Endothelial cell of umbilical vein (primary cell): ENCODE measurements at regions of chr22 and their contacts with region 1.

Region 1: DNA sequence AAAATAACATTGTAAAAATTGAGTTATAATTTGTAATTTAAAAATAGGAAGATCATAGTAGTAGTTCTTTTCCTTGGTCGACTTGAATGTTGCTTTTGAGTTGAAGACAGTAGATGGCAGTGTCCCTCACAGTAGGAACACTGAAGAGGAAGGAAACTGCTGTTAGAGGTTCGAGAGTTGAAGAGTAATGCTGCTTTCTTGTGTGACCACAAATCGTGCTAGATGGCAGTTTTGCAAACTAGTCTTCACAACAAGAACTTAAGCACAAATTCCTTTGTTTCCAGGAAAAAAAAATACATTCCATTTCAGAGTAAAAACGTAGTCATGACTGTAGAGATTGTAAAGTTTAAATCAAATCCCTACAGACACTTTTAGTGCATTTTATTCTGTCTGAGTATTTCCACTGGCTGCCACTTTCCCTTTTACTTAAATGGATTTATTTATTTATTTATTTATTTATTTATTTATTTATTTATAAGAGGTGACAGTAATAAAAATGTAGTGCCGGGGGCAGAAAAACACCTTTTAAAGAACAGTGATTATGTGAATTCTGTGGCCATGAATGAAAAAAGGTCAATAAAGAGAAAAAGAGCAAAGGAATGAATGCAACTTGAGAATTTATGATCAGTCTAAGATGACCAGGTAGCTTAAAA is 54.6 kb downstream of the SPECC1L start:
- DNase-seq: peak; percentile 87
- H3K4me3 ChIP-seq: no peak overlapping the region
- H3K27ac ChIP-seq: no peak overlapping the region
- H3K4me1 ChIP-seq: peaks cover 27% of the 10 kb centered on the region
- H3K27me3 ChIP-seq: no peaks in the 10 kb centered on the region
- CTCF ChIP-seq: peak; percentile 64
- POLR2A ChIP-seq: no peak

Region 2: DNA sequence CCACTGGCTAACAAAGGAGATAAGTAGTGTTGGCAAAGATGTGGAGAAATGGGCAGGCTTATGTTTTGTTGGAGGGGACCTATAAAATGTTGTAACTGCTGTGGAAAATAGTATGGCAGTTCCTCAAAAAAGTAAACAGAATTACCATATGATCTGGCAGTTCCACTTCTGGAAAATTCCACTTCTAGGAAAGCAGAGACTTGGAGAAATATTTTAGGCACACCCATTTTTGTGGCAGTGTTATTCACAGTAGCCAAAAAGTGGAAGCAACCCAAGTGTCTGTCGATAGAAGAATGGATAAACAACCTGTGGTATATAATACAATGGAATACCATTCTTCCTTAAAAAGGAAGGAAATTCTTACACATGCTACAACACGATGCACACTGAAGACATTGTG is 45.2 kb after region 1 on chr22:
- CTCF ChIA-PET with region 1: no interaction called
- POLR2A ChIA-PET with region 1: no interaction called
- dilution Hi-C with region 1: no loop called
- intact Hi-C with region 1: loop called (anchors 5 kb)
- DNase-seq: peak; percentile 62
- H3K4me3 ChIP-seq: no peak overlapping the region
- H3K27ac ChIP-seq: peak overlapping the region; percentile 16
- H3K4me1 ChIP-seq: peaks cover 6% of the 10 kb centered on the region
- H3K27me3 ChIP-seq: no peaks in the 10 kb centered on the region
- CTCF ChIP-seq: no peak
- POLR2A ChIP-seq: no peak

Region 3: DNA sequence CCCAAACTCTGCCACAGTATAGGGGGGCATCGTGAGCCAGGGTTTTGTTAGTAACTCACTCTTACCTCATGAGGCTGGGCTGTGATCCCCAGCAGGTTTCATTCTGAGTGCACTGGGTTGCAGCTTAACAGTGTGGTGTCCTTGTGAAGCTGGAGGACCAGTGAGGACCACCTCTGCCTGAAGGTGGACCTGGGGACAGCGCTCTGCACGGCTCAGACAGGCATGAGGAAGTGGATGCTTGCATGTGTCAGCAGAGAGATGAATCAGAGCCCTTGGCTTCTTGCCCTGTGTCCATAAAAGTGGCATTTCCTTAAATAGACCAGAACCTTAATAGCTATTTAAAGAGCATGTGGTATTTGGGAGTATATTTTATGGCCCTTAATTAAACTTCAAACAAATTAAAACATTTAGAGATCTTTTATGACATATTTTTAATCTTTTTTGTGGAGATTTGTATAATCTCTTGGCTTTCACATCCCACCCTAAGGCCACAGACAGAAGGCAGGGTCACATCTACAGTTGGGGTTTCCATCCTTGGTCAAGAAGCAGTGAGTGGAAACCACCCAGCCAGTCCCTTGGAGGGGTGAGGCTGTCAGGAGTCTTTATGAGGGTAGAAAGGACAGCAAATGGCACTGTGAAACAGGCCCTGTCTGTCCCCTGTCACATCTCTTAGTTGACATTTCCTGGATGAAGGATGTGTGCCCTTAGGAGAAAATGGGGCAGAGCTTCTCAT is 77.4 kb after region 1 on chr22:
- CTCF ChIA-PET with region 1: interaction called, 3 read pairs
- POLR2A ChIA-PET with region 1: no interaction called
- dilution Hi-C with region 1: no loop called
- intact Hi-C with region 1: loop called (anchors 5 kb)
- DNase-seq: peak; percentile 97
- H3K4me3 ChIP-seq: no peak overlapping the region
- H3K27ac ChIP-seq: peak overlapping the region; percentile 78
- H3K4me1 ChIP-seq: peaks cover 53% of the 10 kb centered on the region
- H3K27me3 ChIP-seq: no peaks in the 10 kb centered on the region
- CTCF ChIP-seq: no peak
- POLR2A ChIP-seq: no peak

Region 4: GRCh38 chr22:24525416-24526037 is 200.3 kb after region 1 on chr22:
- CTCF ChIA-PET with region 1: interaction called, 6 read pairs
- POLR2A ChIA-PET with region 1: no interaction called
- dilution Hi-C with region 1: no loop called
- intact Hi-C with region 1: loop called (anchors 1 kb)
- DNase-seq: peak; percentile 72
- H3K4me3 ChIP-seq: no peak overlapping the region
- H3K27ac ChIP-seq: no peak overlapping the region
- H3K4me1 ChIP-seq: peaks cover 9% of the 10 kb centered on the region
- H3K27me3 ChIP-seq: no peaks in the 10 kb centered on the region
- CTCF ChIP-seq: peak; percentile 84 to 89
- POLR2A ChIP-seq: no peak